Colonic mucosa (tissue), 4 donors: ENCODE measurements at regions of chr17 and their contacts with region 1.

Region 1: GRCh38 chr17:70636517-70637133 is 467.3 kb downstream of the KCNJ2 start:
- DNase-seq: no peak
- H3K4me3 ChIP-seq: no peak overlapping the region
- H3K27ac ChIP-seq: no peak overlapping the region
- H3K4me1 ChIP-seq: no peaks in the 10 kb centered on the region
- H3K27me3 ChIP-seq: no peaks in the 10 kb centered on the region
- CTCF ChIP-seq: peak; percentile 78

Region 2: GRCh38 chr17:70332356-70333210 is 304.0 kb before region 1 on chr17:
- intact Hi-C with region 1: no loop called
- DNase-seq: peak; percentile 59
- H3K4me3 ChIP-seq: no peak overlapping the region
- H3K27ac ChIP-seq: no peak overlapping the region
- H3K4me1 ChIP-seq: no peaks in the 10 kb centered on the region
- H3K27me3 ChIP-seq: no peaks in the 10 kb centered on the region
- CTCF ChIP-seq: no peak

Region 3: GRCh38 chr17:70687421-70687820 is 50.8 kb after region 1 on chr17:
- intact Hi-C with region 1: no loop called
- DNase-seq: no peak
- H3K4me3 ChIP-seq: no peak overlapping the region
- H3K27ac ChIP-seq: no peak overlapping the region
- H3K4me1 ChIP-seq: no peaks in the 10 kb centered on the region
- H3K27me3 ChIP-seq: no peaks in the 10 kb centered on the region
- CTCF ChIP-seq: no peak

Region 4: DNA sequence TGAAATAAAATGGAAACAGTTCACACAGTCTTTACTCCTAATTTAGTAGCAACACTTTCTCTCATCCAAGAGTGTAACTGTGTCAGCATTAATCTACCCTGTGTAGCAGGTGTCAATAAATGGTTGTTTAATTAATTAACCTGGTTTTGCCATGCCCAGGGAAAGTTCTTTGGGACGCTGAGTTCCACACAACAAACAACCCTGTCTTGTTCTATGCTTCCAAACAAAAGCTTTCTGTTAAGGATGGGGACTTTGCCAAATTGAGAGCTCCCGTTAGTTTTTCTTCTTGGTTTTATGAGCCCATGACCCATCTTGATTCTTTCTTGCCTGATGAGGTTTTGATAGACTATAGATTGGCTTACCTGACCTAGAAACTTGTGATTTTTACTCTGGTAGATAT is 62.8 kb after region 1 on chr17:
- intact Hi-C with region 1: no loop called
- DNase-seq: no peak
- H3K4me3 ChIP-seq: no peak overlapping the region
- H3K27ac ChIP-seq: no peak overlapping the region
- H3K4me1 ChIP-seq: no peaks in the 10 kb centered on the region
- H3K27me3 ChIP-seq: no peaks in the 10 kb centered on the region
- CTCF ChIP-seq: no peak

Region 5: GRCh38 chr17:70879401-70879800 is 242.8 kb after region 1 on chr17:
- intact Hi-C with region 1: no loop called
- DNase-seq: no peak
- H3K4me3 ChIP-seq: no peak overlapping the region
- H3K27ac ChIP-seq: no peak overlapping the region
- H3K4me1 ChIP-seq: no peaks in the 10 kb centered on the region
- H3K27me3 ChIP-seq: no peaks in the 10 kb centered on the region
- CTCF ChIP-seq: no peak

Region 6: GRCh38 chr17:71084219-71084618 is 447.6 kb after region 1 on chr17:
- intact Hi-C with region 1: loop called (anchors 5 kb)
- DNase-seq: peak; percentile 51
- H3K4me3 ChIP-seq: no peak overlapping the region
- H3K27ac ChIP-seq: no peak overlapping the region
- H3K4me1 ChIP-seq: no peaks in the 10 kb centered on the region
- H3K27me3 ChIP-seq: no peaks in the 10 kb centered on the region
- CTCF ChIP-seq: no peak